Activated naive CD4-positive, alpha-beta T cell treated with anti-CD3 and anti-CD28 coated beads for 36 hours (primary cell): ENCODE measurements at regions of chr6 and their contacts with region 1.

Region 1: DNA sequence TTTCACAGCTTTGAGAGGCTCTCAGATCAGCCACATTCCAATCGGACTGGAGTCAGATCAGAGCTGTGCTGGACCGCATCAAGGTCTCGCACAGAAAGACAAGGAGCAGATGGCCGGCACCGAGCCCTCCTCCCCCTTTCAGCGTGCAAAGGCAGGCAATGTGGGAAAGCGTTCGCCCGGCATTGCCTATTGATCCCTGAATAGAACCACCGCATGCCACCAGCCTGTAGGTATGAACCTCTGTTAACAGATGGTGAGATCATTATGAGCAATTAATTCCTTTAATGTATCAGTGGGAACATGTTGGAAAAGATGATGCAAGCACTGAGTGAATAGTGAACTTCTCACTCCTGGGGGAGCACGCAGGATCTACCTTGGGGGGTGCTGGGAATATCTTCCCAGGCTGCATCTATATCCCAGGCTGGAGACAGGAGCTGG is 117.5 kb upstream of the ID4 start:
- DNase-seq: no peak
- H3K4me3 Mint-ChIP-seq: no peak overlapping the region
- H3K27ac Mint-ChIP-seq: no peak overlapping the region
- H3K4me1 Mint-ChIP-seq: no peaks in the 10 kb centered on the region
- H3K27me3 Mint-ChIP-seq: no peaks in the 10 kb centered on the region

Region 2: DNA sequence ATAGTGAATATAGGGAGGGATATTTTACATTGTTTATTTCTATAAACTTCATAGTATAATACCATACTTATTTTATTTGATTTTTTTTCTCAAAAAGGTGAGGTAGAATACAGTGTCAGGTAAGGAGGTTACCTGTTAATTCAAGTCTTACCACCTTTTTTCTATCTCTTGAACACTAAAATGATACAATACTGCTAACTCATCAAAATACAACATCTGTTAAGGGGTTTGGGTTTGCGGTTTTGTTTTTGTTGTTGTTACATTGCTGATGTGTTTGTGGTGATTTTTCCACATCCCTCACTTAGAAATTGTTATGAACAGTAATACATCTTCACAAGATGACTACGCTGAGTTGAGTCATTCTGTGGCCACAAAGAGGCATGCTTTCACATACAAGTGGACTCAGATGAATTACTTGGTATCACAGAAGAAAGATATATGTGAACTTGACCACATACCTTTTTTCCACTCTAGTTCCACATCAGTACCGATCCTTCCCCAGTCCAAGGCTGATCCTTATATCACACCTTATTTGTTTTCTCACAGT is 21.9 kb before region 1 on chr6:
- CTCF ChIA-PET with region 1: no interaction called
- intact Hi-C with region 1: loop called (anchors 2 kb)
- DNase-seq: no peak
- H3K4me3 Mint-ChIP-seq: no peak overlapping the region
- H3K27ac Mint-ChIP-seq: no peak overlapping the region
- H3K4me1 Mint-ChIP-seq: no peaks in the 10 kb centered on the region
- H3K27me3 Mint-ChIP-seq: peaks cover 4% of the 10 kb centered on the region